Common myeloid progenitor, CD34-positive (primary cell): ENCODE measurements at regions of chr13 and their contacts with region 1.

Region 1: DNA sequence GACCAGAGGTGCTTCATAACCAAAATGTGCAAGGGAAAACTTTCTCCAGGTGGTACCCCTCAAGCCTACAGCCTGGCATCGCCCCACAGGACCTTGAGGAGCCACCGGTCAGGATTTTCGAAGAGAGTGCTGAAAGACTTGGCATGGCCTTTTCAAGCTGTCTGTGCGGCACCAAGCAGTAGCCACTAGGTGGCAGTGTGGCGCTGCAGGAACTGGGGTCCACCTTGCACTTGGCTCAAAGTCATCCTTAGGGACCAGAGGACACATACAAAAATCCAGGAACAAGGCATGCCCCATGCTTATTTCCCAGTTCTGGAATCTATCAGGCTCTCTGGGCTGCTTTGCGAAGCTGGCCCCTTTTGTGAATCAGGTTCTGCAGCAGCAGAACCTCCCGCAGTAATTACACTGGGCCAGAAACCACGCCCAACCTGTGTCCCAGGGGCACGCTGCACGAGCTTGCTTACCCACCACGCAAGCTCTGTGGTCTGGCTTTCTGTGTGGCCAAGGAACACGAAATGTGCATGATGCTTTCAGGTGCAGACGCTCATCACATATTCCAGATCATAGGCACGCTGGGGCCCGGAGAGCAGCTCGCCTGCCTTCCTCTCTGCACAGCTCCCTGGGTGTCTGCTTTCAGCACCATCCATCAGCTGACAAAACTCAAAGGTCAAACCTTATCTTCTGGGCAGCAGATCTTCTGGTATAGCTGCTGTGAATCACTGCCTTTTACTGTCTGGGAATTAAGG is 87.2 kb downstream of the SLC7A1 start:
- DNase-seq: peak; percentile 53 to 73 (median 59)
- H3K4me3 ChIP-seq: no peak overlapping the region
- H3K27ac ChIP-seq: no peak overlapping the region
- H3K4me1 ChIP-seq: no peaks in the 10 kb centered on the region
- H3K27me3 ChIP-seq: peaks cover 0 to 21% (median 3%) of the 10 kb centered on the region in 5 experiments

Region 2: DNA sequence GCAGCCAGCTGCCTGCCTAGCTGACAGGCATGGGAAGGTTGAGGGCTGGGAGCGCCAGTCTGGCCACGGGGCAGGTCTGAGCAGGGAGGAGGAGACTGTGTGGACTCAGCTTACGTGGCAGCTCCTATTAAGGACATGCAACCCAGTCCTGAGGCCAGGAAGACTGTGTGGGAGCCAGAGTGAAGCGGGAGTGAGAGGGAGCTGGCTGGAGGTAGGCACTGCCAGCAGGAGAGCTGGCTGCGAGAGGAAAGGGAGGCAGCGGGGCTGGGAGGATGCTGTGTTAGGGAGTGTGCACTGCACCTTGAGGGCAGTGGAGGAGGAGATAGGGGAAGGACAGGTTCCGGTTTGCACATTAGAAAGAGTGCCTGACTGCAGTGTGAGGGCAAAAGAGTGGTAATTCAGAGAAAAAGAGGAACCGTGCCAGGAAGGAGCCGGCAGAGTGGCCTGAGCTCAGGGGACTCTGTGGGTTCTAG is 12.0 kb before region 1 on chr13:
- CTCF ChIA-PET with region 1: interaction called, 30 read pairs
- POLR2A ChIA-PET with region 1: no interaction called
- DNase-seq: peak; percentile 43 to 84 (median 80)
- H3K4me3 ChIP-seq: peak overlapping the region in 4 of 7 experiments; percentile 21 to 63 (median 33)
- H3K27ac ChIP-seq: no peak overlapping the region
- H3K4me1 ChIP-seq: peaks cover 2 to 23% (median 16%) of the 10 kb centered on the region in 4 experiments
- H3K27me3 ChIP-seq: no peaks in the 10 kb centered on the region

Region 3: GRCh38 chr13:29520671-29521070 is 12.4 kb after region 1 on chr13:
- CTCF ChIA-PET with region 1: interaction called, 31 read pairs
- POLR2A ChIA-PET with region 1: no interaction called
- DNase-seq: no peak
- H3K4me3 ChIP-seq: no peak overlapping the region
- H3K27ac ChIP-seq: no peak overlapping the region
- H3K4me1 ChIP-seq: no peaks in the 10 kb centered on the region
- H3K27me3 ChIP-seq: no peaks in the 10 kb centered on the region

Region 4: GRCh38 chr13:29548722-29549121 is 40.4 kb after region 1 on chr13:
- CTCF ChIA-PET with region 1: no interaction called
- POLR2A ChIA-PET with region 1: no interaction called
- DNase-seq: peak; percentile 12 to 32 (median 18)
- H3K4me3 ChIP-seq: no peak overlapping the region
- H3K27ac ChIP-seq: no peak overlapping the region
- H3K4me1 ChIP-seq: peaks cover 0 to 4% (median 0%) of the 10 kb centered on the region in 4 experiments
- H3K27me3 ChIP-seq: no peaks in the 10 kb centered on the region

Region 5: DNA sequence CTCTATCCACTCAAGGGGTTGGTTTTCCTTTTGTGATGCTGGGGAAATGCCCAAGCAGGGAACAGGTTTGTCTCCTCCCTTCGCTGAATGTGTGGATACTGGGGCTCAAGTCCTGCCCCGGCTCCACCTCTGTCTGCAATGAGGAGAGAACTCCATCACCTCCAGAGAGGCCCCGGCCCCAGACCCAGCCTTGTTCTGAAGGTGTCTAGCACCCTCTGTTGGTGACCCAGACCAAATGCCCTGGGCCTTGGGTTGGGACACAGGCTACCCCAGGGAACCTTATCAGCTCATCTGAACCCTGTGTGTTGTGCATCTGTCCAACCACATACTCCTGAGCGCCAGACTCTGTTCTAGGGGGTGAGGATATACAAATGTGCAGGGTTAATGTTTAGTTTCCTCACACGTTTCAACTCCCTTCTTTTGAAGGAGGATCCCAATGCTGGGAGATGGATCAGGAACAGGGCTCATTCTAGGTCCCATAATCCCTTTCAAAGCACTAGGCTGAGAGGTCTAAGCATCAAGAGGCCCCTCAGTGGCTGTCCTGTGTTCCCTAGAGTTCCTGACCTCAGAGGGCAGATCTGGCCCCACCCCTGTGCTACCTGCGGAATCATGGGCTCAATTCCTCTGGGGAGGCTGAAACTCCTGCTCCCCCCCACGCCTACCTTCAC is 199.7 kb after region 1 on chr13:
- CTCF ChIA-PET with region 1: interaction called, 41 read pairs
- POLR2A ChIA-PET with region 1: no interaction called
- DNase-seq: peak; percentile 48 to 60 (median 56)
- H3K4me3 ChIP-seq: no peak overlapping the region
- H3K27ac ChIP-seq: no peak overlapping the region
- H3K4me1 ChIP-seq: no peaks in the 10 kb centered on the region
- H3K27me3 ChIP-seq: peaks cover 0 to 9% (median 7%) of the 10 kb centered on the region in 5 experiments